Activated naive CD4-positive, alpha-beta T cell treated with anti-CD3 and anti-CD28 coated beads, Interleukin-2, amount 10 ng/mL, durations not matched to agents 7 days and 5 days (primary cell): ENCODE measurements at regions of chr19 and their contacts with region 1.

Region 1: GRCh38 chr19:10431943-10432735 is 11.8 kb downstream of the PDE4A start:
- DNase-seq: peak; percentile 77
- H3K4me3 Mint-ChIP-seq: peak overlapping the region; percentile 72
- H3K27ac Mint-ChIP-seq: no peak overlapping the region
- H3K4me1 Mint-ChIP-seq: peaks cover 69% of the 10 kb centered on the region
- H3K27me3 Mint-ChIP-seq: peaks cover 67% of the 10 kb centered on the region

Region 2: DNA sequence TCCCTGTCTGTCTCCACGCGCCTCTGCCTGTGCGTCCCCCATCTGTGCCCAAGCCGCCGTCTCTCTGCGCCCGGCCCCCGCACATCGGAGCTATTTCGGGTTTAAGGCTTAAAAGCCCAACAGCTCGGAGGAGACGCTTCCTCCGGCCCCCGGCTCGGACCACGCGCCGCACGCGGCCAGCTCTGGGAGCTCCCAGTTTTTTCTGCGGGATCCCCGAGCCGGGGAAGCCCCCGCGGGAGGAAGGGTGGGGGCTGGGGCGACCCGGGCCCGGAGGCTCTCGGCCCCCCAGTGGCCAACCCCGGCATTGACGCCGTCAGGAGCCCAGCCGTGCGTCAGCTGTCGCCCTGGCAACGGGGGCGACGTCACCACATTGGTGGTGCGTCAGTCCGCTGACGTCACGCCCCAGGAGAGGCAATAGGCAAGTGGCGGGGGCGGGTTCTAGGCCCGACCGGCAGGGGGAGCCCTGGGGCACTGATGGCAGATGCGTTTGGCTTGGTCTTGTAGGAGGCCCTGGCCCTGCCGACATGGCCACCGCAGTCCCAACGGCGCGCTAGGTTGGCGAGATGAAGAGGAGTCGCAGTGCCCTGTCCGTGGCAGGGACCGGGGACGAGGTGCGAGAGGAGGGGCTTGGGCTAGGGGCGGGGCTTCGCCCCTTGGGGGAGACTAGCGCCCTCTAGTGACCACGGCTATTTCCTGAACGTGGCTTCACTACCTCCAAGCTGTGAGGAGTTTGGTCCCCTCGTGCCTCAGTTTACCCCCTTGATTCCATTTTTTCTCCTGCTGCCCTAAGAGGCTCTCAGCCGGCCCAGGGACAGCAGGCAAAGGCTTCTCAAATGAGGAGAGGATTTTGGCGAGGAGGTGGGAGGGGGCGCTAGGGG is 15.5 kb before region 1 on chr19:
- CTCF ChIA-PET with region 1: interaction called, 47 read pairs
- DNase-seq: peak; percentile 97
- H3K4me3 Mint-ChIP-seq: peak overlapping the region; percentile 61
- H3K27ac Mint-ChIP-seq: peak overlapping the region; percentile 90
- H3K4me1 Mint-ChIP-seq: peaks cover 73% of the 10 kb centered on the region
- H3K27me3 Mint-ChIP-seq: peaks cover 56% of the 10 kb centered on the region